Gastrocnemius medialis (tissue), 4 donors: ENCODE measurements at regions of chr20 and their contacts with region 1.

Region 1: DNA sequence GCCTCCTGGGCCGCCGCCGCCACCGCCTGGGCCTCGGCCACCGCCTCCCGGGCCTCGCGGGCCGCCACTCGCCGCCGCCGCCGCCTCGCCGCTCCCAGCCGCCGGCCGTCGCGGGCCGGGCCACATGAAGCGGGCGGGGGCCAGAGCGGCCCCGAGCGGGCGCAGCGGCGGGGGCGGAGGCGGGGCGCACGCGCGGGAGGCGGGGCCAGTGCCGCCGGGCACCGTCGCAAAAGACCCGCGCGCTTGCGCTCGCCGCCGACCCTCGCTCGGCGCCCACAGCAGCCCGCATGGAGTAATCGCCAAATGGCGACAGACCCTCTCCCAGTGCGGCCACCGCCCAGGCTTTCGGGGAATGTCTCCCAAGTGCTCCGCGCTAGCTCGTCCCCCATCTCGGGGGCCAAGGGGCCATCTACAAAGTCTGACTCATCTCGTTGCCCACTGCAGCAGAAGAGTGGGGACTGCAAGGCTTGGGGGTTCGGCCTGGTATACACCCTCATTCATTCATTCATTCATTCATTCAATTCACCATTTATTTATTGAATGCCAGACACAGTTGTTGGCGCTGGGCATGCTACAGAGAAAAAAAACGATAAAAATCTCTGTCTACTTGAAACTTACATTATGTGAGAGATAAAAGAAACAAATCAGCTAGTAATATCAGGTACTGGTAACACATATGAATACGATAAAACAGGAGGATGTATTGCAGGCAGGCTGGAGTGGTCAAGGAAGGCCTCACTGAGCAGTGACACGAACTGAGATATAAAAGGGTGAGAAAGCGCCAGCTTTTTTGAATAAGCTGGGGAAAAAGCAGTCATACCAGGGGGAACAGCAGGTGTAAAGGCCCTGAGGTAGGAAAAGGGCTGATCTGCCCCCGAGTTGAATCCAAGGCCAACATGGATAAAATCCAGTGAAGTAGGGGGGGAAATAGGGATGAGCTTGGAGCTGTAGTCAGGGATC is at the start of gene B4GALT5:
- DNase-seq: peak; percentile 27 to 56
- ATAC-seq: peak; percentile 67 to 72
- H3K4me3 ChIP-seq: peak within 1 kb of the TSS; percentile 89 to 98 (median 92)
- H3K27ac ChIP-seq: peak within 1 kb of the TSS; percentile 95 to 99 (median 98)
- H3K4me1 ChIP-seq: peaks cover 44 to 59% of the 10 kb centered on the region in 2 donors
- H3K27me3 ChIP-seq: no peaks in the 10 kb centered on the region
- CTCF ChIP-seq: no peak
- POLR2A ChIP-seq: peak; percentile 69 to 78
- total RNA-seq, gene B4GALT5: 27.6 to 75.2 (median 56.4) TPM

Region 2: GRCh38 chr20:49594143-49594930 is 119.7 kb before region 1 on chr20:
- in situ Hi-C with region 1: no loop called
- intact Hi-C with region 1: no loop called
- DNase-seq: peak; percentile 54 to 78
- ATAC-seq: peak; percentile 71 to 78
- H3K4me3 ChIP-seq: no peak overlapping the region
- H3K27ac ChIP-seq: peak overlapping the region in 3 of 4 donors; percentile 59 to 62 (median 62)
- H3K4me1 ChIP-seq: no peaks in the 10 kb centered on the region
- H3K27me3 ChIP-seq: no peaks in the 10 kb centered on the region
- CTCF ChIP-seq: no peak
- POLR2A ChIP-seq: no peak

Region 3: DNA sequence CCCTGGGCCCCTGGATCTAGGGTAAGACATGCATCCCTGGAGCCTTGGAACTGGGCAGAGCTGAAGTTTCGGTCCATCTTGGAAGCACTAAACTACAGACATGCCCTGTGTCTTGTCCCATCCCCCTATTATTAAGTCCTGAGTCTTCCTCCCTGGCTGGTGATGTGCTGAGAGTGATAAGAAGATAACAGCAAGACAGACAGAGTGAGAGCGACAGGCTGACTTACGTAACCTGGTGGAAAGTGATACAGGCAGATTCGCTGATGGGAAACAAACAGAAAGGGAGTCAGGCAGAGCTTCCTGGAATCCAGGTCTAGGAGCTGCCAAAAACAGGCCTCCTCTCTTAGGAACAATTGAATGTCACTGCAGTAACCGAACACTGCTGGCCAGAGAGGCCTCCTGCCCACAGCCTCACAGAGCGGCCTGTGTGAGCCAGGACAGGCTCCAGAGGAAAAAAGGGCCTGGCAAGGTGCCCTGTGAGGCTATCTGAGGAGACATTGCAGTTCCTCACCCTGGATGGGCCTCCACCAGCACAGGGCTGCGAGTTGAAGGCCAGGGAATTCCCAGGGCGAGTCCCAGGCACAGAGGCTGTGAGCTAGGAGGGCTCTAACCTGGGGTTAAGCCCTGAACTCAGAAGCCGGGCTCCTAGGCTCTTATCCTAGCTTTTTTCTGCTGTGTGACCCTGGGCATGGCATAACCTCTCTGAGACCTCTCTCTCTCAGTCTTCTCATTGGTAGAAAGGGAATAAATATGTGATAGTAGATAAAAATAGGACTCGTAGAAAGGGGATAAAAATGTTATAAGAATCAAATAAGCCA is 33.9 kb after region 1 on chr20:
- in situ Hi-C with region 1: no loop called
- intact Hi-C with region 1: loop called (anchors 2 kb)
- DNase-seq: peak; percentile 92 to 98
- ATAC-seq: peak; percentile 94 to 98
- H3K4me3 ChIP-seq: no peak overlapping the region
- H3K27ac ChIP-seq: peak overlapping the region; percentile 78 to 90 (median 87)
- H3K4me1 ChIP-seq: peaks cover 32 to 40% of the 10 kb centered on the region in 2 donors
- H3K27me3 ChIP-seq: no peaks in the 10 kb centered on the region
- CTCF ChIP-seq: no peak
- POLR2A ChIP-seq: no peak

Region 4: DNA sequence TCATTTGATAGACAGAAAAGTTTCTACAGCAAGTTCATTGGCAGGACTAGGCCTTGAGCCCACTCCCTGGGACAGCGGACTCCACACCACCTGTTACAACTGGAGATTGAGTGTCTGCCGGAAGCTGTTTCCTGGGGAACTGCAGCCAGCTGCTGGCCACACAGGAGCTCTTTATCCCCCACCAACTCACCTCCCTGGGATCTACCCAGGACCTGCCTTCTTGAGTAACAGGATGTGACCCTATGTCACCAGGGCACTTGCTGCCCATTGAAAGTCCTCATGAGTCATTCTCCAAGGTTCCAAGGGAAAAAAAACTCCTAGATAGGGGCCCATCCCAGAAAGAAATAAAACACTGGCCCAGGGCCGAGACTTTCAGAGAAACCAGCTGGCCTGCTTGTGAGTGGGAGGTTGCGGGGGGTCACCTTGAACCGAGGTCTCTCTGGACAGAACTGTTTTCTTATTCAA is 61.2 kb after region 1 on chr20:
- in situ Hi-C with region 1: no loop called
- intact Hi-C with region 1: loop called (anchors 2 kb)
- DNase-seq: peak; percentile 84 to 95
- ATAC-seq: peak; percentile 92 to 93
- H3K4me3 ChIP-seq: no peak overlapping the region
- H3K27ac ChIP-seq: peak overlapping the region; percentile 83 to 89 (median 86)
- H3K4me1 ChIP-seq: peaks cover 32 to 44% of the 10 kb centered on the region in 2 donors
- H3K27me3 ChIP-seq: no peaks in the 10 kb centered on the region
- CTCF ChIP-seq: no peak
- POLR2A ChIP-seq: peak in 1 of 2 donors; percentile 3

Region 5: GRCh38 chr20:49915378-49916145 is 201.5 kb after region 1 on chr20 and contains the start of gene SPATA2:
- in situ Hi-C with region 1: no loop called
- intact Hi-C with region 1: loop called (anchors 10 kb)
- DNase-seq: peak; percentile 91 to 92
- ATAC-seq: peak; percentile 89 to 92
- H3K4me3 ChIP-seq: peak within 1 kb of the TSS; percentile 84 to 99 (median 92)
- H3K27ac ChIP-seq: peak within 1 kb of the TSS; percentile 94 to 100 (median 96)
- H3K4me1 ChIP-seq: peaks cover 34 to 45% of the 10 kb centered on the region in 2 donors
- H3K27me3 ChIP-seq: no peaks in the 10 kb centered on the region
- CTCF ChIP-seq: no peak
- POLR2A ChIP-seq: peak; percentile 88 to 89
- total RNA-seq, gene SPATA2: 7.7 to 10.7 (median 9.7) TPM